Activated CD4-positive, alpha-beta T cell treated with anti-CD3 and anti-CD28 coated beads, Interleukin-2, amount 10 ng/mL, durations not matched to agents 24 days and 14 days (primary cell): ENCODE measurements at regions of chr6 and their contacts with region 1.

Region 1: GRCh38 chr6:142155895-142156757 is 9.1 kb downstream of the VTA1 start:
- DNase-seq: no peak
- H3K4me3 Mint-ChIP-seq: peak overlapping the region; percentile 4
- H3K27ac Mint-ChIP-seq: no peak overlapping the region
- H3K4me1 Mint-ChIP-seq: peaks cover 10% of the 10 kb centered on the region
- H3K27me3 Mint-ChIP-seq: no peaks in the 10 kb centered on the region

Region 2: DNA sequence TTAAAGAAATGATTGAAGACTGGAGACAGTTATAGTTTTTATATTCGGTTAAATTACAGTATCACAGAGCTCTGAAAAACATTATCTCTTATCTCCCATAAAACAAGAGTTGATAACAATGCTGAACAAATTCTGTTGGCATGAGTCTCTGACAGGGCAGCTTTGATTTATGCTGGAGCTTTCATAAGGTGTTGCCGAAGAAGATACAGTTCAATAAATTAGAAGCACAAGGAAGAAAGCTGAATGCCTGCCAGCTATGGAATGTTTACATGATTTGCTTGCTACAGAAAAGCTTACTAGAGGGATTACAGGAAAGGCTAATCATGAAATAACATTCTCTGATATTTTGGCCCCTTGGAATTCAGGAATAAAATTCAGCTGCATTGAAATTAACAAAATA is 455.3 kb before region 1 on chr6:
- intact Hi-C with region 1: no loop called
- DNase-seq: no peak
- H3K4me3 Mint-ChIP-seq: no peak overlapping the region
- H3K27ac Mint-ChIP-seq: no peak overlapping the region
- H3K4me1 Mint-ChIP-seq: no peaks in the 10 kb centered on the region
- H3K27me3 Mint-ChIP-seq: no peaks in the 10 kb centered on the region

Region 3: GRCh38 chr6:142088858-142089216 is 67.3 kb before region 1 on chr6:
- intact Hi-C with region 1: no loop called
- DNase-seq: no peak
- H3K4me3 Mint-ChIP-seq: no peak overlapping the region
- H3K27ac Mint-ChIP-seq: no peak overlapping the region
- H3K4me1 Mint-ChIP-seq: no peaks in the 10 kb centered on the region
- H3K27me3 Mint-ChIP-seq: peaks cover 19% of the 10 kb centered on the region

Region 4: GRCh38 chr6:142207265-142207877 is 51.2 kb after region 1 on chr6:
- intact Hi-C with region 1: loop called (anchors 2 kb)
- DNase-seq: peak; percentile 79
- H3K4me3 Mint-ChIP-seq: no peak overlapping the region
- H3K27ac Mint-ChIP-seq: no peak overlapping the region
- H3K4me1 Mint-ChIP-seq: no peaks in the 10 kb centered on the region
- H3K27me3 Mint-ChIP-seq: no peaks in the 10 kb centered on the region

Region 5: DNA sequence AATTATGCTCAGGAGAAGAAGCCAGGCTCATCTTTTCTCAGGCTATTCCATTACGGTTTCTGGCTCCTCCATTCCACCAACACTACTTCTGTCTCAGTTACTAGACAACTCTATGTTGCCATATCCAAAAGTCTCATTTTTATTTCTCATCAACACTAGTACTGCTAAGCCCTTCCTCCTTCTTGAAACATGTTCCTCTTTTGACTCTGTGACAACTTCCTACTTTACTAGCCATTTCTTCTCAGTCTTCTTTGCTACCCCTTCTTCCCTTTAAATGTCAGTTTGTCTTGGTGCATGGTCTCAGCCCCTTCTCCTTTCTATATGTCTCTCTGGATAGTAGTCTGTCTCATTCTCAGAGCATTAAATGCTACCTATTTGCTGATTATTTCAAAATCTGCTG is 138.6 kb after region 1 on chr6:
- intact Hi-C with region 1: no loop called
- DNase-seq: no peak
- H3K4me3 Mint-ChIP-seq: no peak overlapping the region
- H3K27ac Mint-ChIP-seq: no peak overlapping the region
- H3K4me1 Mint-ChIP-seq: no peaks in the 10 kb centered on the region
- H3K27me3 Mint-ChIP-seq: peaks cover 22% of the 10 kb centered on the region

Region 6: GRCh38 chr6:142416179-142416578 is 260.1 kb after region 1 on chr6:
- intact Hi-C with region 1: no loop called
- DNase-seq: no peak
- H3K4me3 Mint-ChIP-seq: no peak overlapping the region
- H3K27ac Mint-ChIP-seq: no peak overlapping the region
- H3K4me1 Mint-ChIP-seq: no peaks in the 10 kb centered on the region
- H3K27me3 Mint-ChIP-seq: peaks cover 10% of the 10 kb centered on the region